ENCODE measurements at regions of chr19 and their contacts with region 1.

Region 1: DNA sequence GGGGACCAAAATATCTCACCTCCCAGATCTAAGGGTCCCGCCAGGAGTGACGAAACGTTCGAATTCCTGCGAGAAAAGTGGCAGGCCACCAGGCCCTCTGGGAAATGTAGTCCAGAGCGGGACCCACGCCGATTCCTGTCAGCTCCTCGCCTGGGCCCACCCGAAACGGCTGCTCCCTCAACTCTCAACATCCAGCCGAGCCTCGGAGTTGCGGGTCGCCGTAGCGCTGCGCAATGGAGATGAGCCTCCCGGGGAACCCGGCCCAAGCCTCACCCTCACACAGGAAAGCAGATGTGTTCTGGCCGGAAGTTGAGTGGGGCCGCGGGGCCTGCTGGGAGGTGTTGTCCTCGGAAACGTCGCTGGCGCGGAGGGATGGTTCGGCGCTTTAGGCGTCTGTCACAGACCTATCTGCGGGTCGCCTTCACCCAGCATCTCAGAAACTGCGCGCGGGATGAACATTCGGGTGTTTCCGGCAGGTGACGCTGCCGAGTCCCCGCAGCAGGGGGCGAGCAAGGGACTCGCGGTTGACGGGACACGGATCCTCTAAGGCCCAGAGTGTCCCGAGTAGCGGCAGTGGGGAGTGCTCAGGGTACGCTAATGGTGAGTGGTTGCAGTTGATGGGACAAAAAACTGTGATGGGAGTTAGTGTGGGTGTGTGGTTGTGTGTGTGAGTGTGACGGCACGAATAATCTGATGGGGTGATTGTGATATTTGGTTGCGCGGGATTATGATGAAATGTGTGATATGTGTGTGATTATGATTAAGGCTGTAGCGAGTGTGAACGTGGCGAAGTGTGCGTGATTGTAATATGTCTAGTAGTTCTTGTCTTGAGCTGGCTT is at the starts of genes ZNF568 and ZNF829:
- DNase-seq: peak; percentile 87
- ATAC-seq: peak; percentile 93
- H3K4me3 Mint-ChIP-seq: peak within 1 kb of the TSS; percentile 91
- H3K27ac Mint-ChIP-seq: peak within 1 kb of the TSS; percentile 91
- H3K4me1 Mint-ChIP-seq: peaks cover 26% of the 10 kb centered on the region
- H3K27me3 Mint-ChIP-seq: no peaks in the 10 kb centered on the region
- CTCF ChIP-seq: no peak
- total RNA-seq, gene ZNF568: 12.0 and 13.4 TPM in 2 replicates
- total RNA-seq, gene ZNF829: 7.3 and 7.6 TPM in 2 replicates

Region 2: DNA sequence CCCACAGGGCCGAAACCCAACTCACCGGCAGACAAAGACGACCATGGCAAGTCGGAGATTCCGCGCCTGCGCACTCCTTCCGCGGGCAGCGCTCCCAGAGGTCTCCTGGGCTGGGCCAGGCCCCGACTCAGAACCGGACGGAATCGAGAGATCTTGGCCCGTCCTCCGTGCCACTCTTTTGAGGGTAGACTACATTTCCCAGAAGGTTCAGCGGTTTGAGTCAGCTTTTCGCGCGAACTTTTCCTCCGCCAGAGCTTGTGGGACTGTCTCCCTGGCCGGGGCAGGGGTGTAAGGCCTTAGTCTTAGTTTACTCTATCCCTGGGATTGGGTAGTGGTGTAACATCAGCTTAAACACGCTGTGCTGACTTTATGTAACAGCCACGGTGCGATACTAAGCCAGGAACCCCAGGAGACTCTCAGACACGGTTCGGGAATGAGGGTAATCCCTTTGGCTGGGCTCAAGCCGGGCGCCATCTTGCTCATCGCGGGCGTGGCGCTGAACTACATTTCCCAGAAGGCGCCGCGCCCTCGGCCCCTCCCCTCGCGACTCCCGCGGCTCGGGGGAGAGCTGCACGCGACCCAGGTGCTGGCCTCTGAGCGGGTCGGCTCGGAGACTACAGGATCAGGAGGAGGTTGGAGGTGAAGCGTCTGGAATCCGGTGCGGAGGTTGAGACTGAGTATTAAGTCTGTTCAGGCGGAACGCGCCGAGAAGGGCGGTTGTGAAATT is 387.9 kb before region 1 on chr19 and contains the start of gene ZNF260:
- CTCF ChIA-PET with region 1: no interaction called
- POLR2A ChIA-PET with region 1: interaction called, 3 read pairs
- intact Hi-C with region 1: loop called (anchors 1 kb)
- DNase-seq: peak; percentile 94
- ATAC-seq: peak; percentile 89
- H3K4me3 Mint-ChIP-seq: peak within 1 kb of the TSS; percentile 99
- H3K27ac Mint-ChIP-seq: peak within 1 kb of the TSS; percentile 99
- H3K4me1 Mint-ChIP-seq: peaks cover 27% of the 10 kb centered on the region
- H3K27me3 Mint-ChIP-seq: no peaks in the 10 kb centered on the region
- CTCF ChIP-seq: no peak
- total RNA-seq, gene ZNF260: 9.8 and 13.6 TPM in 2 replicates

Region 3: GRCh38 chr19:36772311-36773222 is 143.6 kb before region 1 on chr19 and contains the start of gene ZNF850:
- CTCF ChIA-PET with region 1: no interaction called
- POLR2A ChIA-PET with region 1: no interaction called
- intact Hi-C with region 1: loop called (anchors 1 kb)
- DNase-seq: peak; percentile 89
- ATAC-seq: peak; percentile 92
- H3K4me3 Mint-ChIP-seq: peak within 1 kb of the TSS; percentile 92
- H3K27ac Mint-ChIP-seq: peak within 1 kb of the TSS; percentile 85
- H3K4me1 Mint-ChIP-seq: peaks cover 24% of the 10 kb centered on the region
- H3K27me3 Mint-ChIP-seq: no peaks in the 10 kb centered on the region
- CTCF ChIP-seq: no peak
- total RNA-seq, gene ZNF850: 5.8 and 7.9 TPM in 2 replicates

Region 4: GRCh38 chr19:36837906-36838783 is 78.1 kb before region 1 on chr19 and contains the start of gene ZNF790:
- CTCF ChIA-PET with region 1: no interaction called
- POLR2A ChIA-PET with region 1: interaction called, 3 read pairs
- intact Hi-C with region 1: loop called (anchors 1 kb)
- DNase-seq: peak; percentile 76
- ATAC-seq: peak; percentile 94
- H3K4me3 Mint-ChIP-seq: no peak within 1 kb of the TSS
- H3K27ac Mint-ChIP-seq: no peak within 1 kb of the TSS
- H3K4me1 Mint-ChIP-seq: peaks cover 2% of the 10 kb centered on the region
- H3K27me3 Mint-ChIP-seq: no peaks in the 10 kb centered on the region
- CTCF ChIP-seq: no peak
- total RNA-seq, gene ZNF790: 10.3 and 11.5 TPM in 2 replicates

Region 5: GRCh38 chr19:36973021-36973843 is 57.0 kb after region 1 on chr19:
- CTCF ChIA-PET with region 1: no interaction called
- POLR2A ChIA-PET with region 1: no interaction called
- intact Hi-C with region 1: loop called (anchors 1 kb)
- DNase-seq: peak; percentile 75
- ATAC-seq: peak; percentile 97
- H3K4me3 Mint-ChIP-seq: peak overlapping the region; percentile 98
- H3K27ac Mint-ChIP-seq: peak overlapping the region; percentile 94
- H3K4me1 Mint-ChIP-seq: peaks cover 10% of the 10 kb centered on the region
- H3K27me3 Mint-ChIP-seq: no peaks in the 10 kb centered on the region
- CTCF ChIP-seq: peak; percentile 38

Region 6: GRCh38 chr19:37045140-37045539 is 128.9 kb after region 1 on chr19:
- CTCF ChIA-PET with region 1: no interaction called
- POLR2A ChIA-PET with region 1: no interaction called
- intact Hi-C with region 1: no loop called
- DNase-seq: no peak
- ATAC-seq: no peak
- H3K4me3 Mint-ChIP-seq: no peak overlapping the region
- H3K27ac Mint-ChIP-seq: no peak overlapping the region
- H3K4me1 Mint-ChIP-seq: no peaks in the 10 kb centered on the region
- H3K27me3 Mint-ChIP-seq: no peaks in the 10 kb centered on the region
- CTCF ChIP-seq: no peak